ENCODE measurements at regions of chr1 and their contacts with region 1.

Region 1: GRCh38 chr1:6245086-6245868 is 1.3 kb downstream of the HES3 start:
- DNase-seq: peak; percentile 83
- H3K4me3 ChIP-seq: no peak overlapping the region
- H3K27ac ChIP-seq: no peak overlapping the region
- H3K4me1 ChIP-seq: peaks cover 2 to 44% (median 35%) of the 10 kb centered on the region in 4 donors
- H3K27me3 ChIP-seq: peaks cover 50 to 99% (median 96%) of the 10 kb centered on the region in 3 donors
- CTCF ChIP-seq: peak; percentile 54 to 78 (median 68)
- EP300 ChIP-seq: no peak
- POLR2A ChIP-seq: no peak

Region 2: DNA sequence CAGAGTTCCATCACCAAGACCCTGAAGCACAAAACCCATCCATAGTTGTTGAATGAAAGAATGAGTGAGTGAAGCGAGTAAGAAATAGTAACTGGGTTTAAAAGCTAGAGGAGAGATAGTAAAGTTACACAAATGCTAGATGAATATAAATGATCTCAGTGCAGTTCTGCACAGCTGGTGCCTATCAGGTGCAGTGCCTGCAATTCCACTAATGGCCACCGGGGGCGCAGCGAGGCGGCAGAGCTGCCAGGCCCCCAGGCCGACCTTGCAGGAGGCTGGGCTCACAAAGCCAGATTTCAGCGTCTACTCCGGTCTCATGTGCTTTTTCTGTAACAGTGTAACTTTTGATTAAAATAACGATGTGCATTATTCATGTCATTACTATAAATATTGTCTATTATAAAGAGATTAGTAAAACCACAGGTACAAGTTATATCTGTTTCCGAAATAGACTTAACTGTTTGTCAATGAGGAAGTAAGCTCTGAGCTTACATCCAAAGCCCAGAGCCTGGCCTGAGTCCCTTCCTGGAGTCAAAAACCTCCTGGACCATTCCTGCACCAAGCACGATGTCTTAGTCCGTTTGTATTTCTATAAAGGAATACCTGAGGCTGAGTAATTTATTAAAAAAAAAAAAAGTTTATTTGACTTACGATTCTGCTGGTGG is 730.6 kb before region 1 on chr1:
- intact Hi-C with region 1: loop called (anchors 10 kb)
- DNase-seq: no peak
- H3K4me3 ChIP-seq: no peak overlapping the region
- H3K27ac ChIP-seq: no peak overlapping the region
- H3K4me1 ChIP-seq: no peaks in the 10 kb centered on the region
- H3K27me3 ChIP-seq: peaks cover 0 to 35% (median 3%) of the 10 kb centered on the region in 3 donors
- CTCF ChIP-seq: peak; percentile 61 to 100 (median 90)
- EP300 ChIP-seq: no peak
- POLR2A ChIP-seq: no peak

Region 3: GRCh38 chr1:6052543-6053205 is 192.6 kb before region 1 on chr1:
- intact Hi-C with region 1: loop called (anchors 2 kb)
- DNase-seq: no peak
- H3K4me3 ChIP-seq: no peak overlapping the region
- H3K27ac ChIP-seq: no peak overlapping the region
- H3K4me1 ChIP-seq: no peaks in the 10 kb centered on the region
- H3K27me3 ChIP-seq: no peaks in the 10 kb centered on the region
- CTCF ChIP-seq: no peak
- EP300 ChIP-seq: no peak
- POLR2A ChIP-seq: no peak

Region 4: GRCh38 chr1:6205849-6206519 is 39.3 kb before region 1 on chr1 and contains the start of gene RNF207:
- intact Hi-C with region 1: loop called (anchors 2 kb)
- DNase-seq: peak; percentile 79
- H3K4me3 ChIP-seq: peak within 1 kb of the TSS; percentile 39 to 58 (median 50)
- H3K27ac ChIP-seq: peak within 1 kb of the TSS; percentile 65 to 84 (median 70)
- H3K4me1 ChIP-seq: peaks cover 0 to 52% (median 40%) of the 10 kb centered on the region in 4 donors
- H3K27me3 ChIP-seq: no peaks in the 10 kb centered on the region
- CTCF ChIP-seq: no peak
- EP300 ChIP-seq: no peak
- POLR2A ChIP-seq: peak in 1 of 2 donors; percentile 11
- total RNA-seq, gene RNF207: 7.8 to 19.1 (median 16.1) TPM

Region 5: GRCh38 chr1:6343506-6344405 is 98.5 kb after region 1 on chr1:
- intact Hi-C with region 1: loop called (anchors 1 kb)
- DNase-seq: peak; percentile 76
- H3K4me3 ChIP-seq: no peak overlapping the region
- H3K27ac ChIP-seq: no peak overlapping the region
- H3K4me1 ChIP-seq: no peaks in the 10 kb centered on the region
- H3K27me3 ChIP-seq: no peaks in the 10 kb centered on the region
- CTCF ChIP-seq: peak; percentile 61 to 93 (median 84)
- EP300 ChIP-seq: no peak
- POLR2A ChIP-seq: no peak

Region 6: DNA sequence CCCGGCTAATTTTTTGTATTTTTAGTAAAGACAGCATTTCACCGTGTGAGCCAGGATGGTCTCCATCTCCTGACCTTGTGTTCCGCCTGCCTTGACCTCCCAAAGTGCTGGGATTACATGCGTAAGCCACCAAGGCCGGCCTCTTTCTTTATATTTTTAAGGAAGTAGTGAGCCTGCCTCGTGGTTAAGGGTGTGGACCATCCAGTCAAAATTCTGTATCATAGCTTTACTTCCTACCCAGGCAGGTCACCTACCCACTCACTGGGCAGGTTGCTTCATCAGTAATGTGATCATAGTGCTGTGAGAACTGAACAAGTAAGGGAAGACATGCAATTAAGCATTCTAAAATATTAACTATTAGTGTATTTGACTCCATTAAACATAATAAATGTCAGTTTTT is 156.4 kb after region 1 on chr1:
- intact Hi-C with region 1: loop called (anchors 5 kb)
- DNase-seq: no peak
- H3K4me3 ChIP-seq: no peak overlapping the region
- H3K27ac ChIP-seq: no peak overlapping the region
- H3K4me1 ChIP-seq: no peaks in the 10 kb centered on the region
- H3K27me3 ChIP-seq: peaks cover 0 to 2% (median 0%) of the 10 kb centered on the region in 3 donors
- CTCF ChIP-seq: no peak
- EP300 ChIP-seq: no peak
- POLR2A ChIP-seq: no peak